PC-3 (cell line): ENCODE measurements at regions of chr14 and their contacts with region 1.

Region 1: GRCh38 chr14:21557084-21557901 is 22.6 kb downstream of the OR10G3 start:
- DNase-seq: peak; percentile 96
- ATAC-seq: peak; percentile 85
- H3K4me3 ChIP-seq: peak overlapping the region; percentile 56
- H3K27ac ChIP-seq: no peak overlapping the region
- H3K4me1 ChIP-seq: peaks cover 4% of the 10 kb centered on the region; the same call in 1 of the 2 replicates
- H3K27me3 ChIP-seq: no peaks in the 10 kb centered on the region
- CTCF ChIP-seq: peak; percentile 92

Region 2: GRCh38 chr14:21455911-21456667 is 101.2 kb before region 1 on chr14 and contains the start of gene CHD8:
- CTCF ChIA-PET with region 1: no interaction called
- POLR2A ChIA-PET with region 1: no interaction called
- intact Hi-C with region 1: loop called (anchors 1 kb)
- DNase-seq: peak; percentile 99
- ATAC-seq: peak; percentile 98
- H3K4me3 ChIP-seq: peak within 1 kb of the TSS; percentile 97
- H3K27ac ChIP-seq: peak within 1 kb of the TSS; percentile 81
- H3K4me1 ChIP-seq: peaks cover 12% of the 10 kb centered on the region
- H3K27me3 ChIP-seq: no peaks in the 10 kb centered on the region
- CTCF ChIP-seq: peak; percentile 81
- total RNA-seq, gene CHD8: 57.4 and 81.0 TPM in 2 replicates

Region 3: DNA sequence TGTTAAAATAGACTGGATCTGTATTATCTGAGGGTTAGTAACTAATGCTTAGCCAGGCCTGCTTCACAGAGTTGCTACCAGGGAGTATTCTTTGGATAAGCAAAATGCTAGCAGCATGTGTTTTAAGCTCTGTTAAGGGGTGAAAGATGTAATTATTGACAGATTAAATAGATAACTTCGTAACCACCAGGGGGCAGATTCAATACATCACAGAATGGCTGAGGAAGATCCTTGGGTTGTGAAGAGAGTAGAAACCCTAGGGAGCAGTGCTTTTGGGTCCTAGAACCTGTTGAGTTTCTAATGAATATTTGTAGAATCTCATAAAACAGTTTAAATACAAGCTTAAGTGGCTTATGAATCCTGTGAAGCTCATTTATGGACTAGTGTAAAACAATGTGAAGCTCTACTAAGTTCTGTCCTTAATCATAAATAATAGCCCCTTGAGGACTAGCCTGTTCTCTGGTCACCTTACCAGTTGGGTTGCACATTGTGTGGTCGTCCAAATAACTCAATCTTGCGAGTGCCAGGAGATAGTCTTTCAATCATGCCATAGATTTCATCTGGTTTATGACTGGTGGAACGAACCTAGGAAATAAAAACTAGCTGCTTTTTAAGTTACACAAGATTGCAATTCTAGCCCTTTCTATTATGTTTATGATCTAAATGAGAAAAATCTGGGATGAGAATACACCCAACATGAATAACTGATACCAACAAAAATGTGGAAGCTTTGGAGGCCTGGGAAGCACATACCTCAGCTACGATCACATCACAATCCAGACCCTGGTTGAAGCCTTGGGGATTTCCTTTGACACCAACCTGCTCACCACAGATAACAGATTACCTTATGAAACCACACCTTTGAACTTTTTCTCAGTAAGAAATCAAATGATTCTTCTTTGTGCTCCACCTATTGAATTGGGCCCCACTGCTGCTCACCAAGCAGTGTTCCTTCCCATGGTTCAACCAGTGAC is 58.5 kb before region 1 on chr14:
- CTCF ChIA-PET with region 1: interaction called, 19 read pairs
- POLR2A ChIA-PET with region 1: interaction called, 3 read pairs
- intact Hi-C with region 1: loop called (anchors 1 kb)
- DNase-seq: peak; percentile 65
- ATAC-seq: peak; percentile 77
- H3K4me3 ChIP-seq: no peak overlapping the region
- H3K27ac ChIP-seq: no peak overlapping the region
- H3K4me1 ChIP-seq: no peaks in the 10 kb centered on the region
- H3K27me3 ChIP-seq: no peaks in the 10 kb centered on the region
- CTCF ChIP-seq: peak; percentile 77

Region 4: DNA sequence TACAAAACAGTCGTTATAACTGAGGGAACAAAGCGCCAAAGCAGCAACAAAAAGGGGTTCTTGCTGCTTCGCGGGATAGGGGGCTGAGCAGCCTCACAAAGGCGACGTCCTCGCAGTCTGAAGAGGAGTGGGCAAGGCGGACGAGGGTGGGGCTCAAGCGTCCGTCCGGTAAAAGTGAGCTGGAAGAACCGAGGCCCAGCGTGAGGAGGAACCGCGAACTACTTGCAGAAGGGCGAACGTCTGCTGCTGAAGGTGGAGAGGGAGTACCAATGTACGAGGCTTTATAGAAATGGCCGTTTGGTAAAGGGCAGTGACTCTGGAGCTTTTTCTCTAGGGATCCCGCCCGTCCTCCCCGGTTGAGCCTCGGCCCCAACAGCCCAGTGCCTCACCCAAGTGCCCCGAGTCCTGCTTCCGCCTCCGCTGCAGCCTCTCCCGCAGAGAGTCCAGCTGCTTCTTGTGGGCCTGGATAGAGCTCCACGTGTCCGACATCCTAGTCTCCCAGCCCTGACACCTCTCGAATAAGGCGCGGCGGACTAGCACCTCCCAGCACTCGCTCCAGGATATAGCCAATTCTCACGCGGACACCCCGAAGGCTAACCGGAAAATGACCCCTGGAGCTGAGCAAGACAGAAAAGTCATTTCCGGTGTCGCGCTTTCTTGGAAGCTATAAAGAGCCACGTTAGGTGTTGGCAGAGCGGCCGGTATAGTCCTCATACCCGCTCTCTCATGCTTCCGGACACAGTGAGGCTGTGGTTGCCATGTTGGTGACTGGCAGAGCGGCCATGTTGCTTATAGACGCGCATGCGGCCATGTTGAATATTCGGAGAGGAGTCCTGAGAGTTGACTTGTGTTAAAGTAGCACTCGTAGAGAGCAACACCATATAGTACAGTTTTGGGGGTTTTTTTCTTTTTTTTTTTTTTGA is 46.3 kb before region 1 on chr14 and contains the start of gene METTL3:
- CTCF ChIA-PET with region 1: interaction called, 14 read pairs
- POLR2A ChIA-PET with region 1: no interaction called
- intact Hi-C with region 1: loop called (anchors 5 kb)
- DNase-seq: peak; percentile 98
- ATAC-seq: peak; percentile 98
- H3K4me3 ChIP-seq: peak within 1 kb of the TSS; percentile 96
- H3K27ac ChIP-seq: peak within 1 kb of the TSS; percentile 83
- H3K4me1 ChIP-seq: peaks cover 18% of the 10 kb centered on the region
- H3K27me3 ChIP-seq: no peaks in the 10 kb centered on the region
- CTCF ChIP-seq: no peak
- total RNA-seq, gene METTL3: 47.6 and 57.1 TPM in 2 replicates

Region 5: GRCh38 chr14:21525962-21526671 is 31.2 kb before region 1 on chr14 and contains the start of gene SALL2:
- CTCF ChIA-PET with region 1: no interaction called
- POLR2A ChIA-PET with region 1: no interaction called
- intact Hi-C with region 1: loop called (anchors 1 kb)
- DNase-seq: peak; percentile 57
- ATAC-seq: peak; percentile 87
- H3K4me3 ChIP-seq: peak within 1 kb of the TSS; percentile 85
- H3K27ac ChIP-seq: no peak within 1 kb of the TSS
- H3K4me1 ChIP-seq: peaks cover 20% of the 10 kb centered on the region
- H3K27me3 ChIP-seq: no peaks in the 10 kb centered on the region
- CTCF ChIP-seq: no peak
- total RNA-seq, gene SALL2: 4.1 and 6.0 TPM in 2 replicates

Region 6: GRCh38 chr14:22641846-22642245 is 1084.6 kb after region 1 on chr14:
- CTCF ChIA-PET with region 1: no interaction called
- POLR2A ChIA-PET with region 1: no interaction called
- intact Hi-C with region 1: no loop called
- DNase-seq: peak; percentile 67
- ATAC-seq: peak; percentile 79
- H3K4me3 ChIP-seq: no peak overlapping the region
- H3K27ac ChIP-seq: no peak overlapping the region
- H3K4me1 ChIP-seq: peaks cover 17% of the 10 kb centered on the region
- H3K27me3 ChIP-seq: no peaks in the 10 kb centered on the region
- CTCF ChIP-seq: no peak